Naive thymus-derived CD4-positive, alpha-beta T cell (primary cell): ENCODE measurements at regions of chr9 and their contacts with region 1.

Region 1: GRCh38 chr9:101311758-101312420 is 72.9 kb downstream of the BAAT start:
- DNase-seq: peak in 7 of 9 donors; percentile 17 to 58 (median 54)
- ATAC-seq: peak; percentile 71
- H3K4me3 ChIP-seq: no peak overlapping the region
- H3K4me3 Mint-ChIP-seq: no peak overlapping the region
- H3K27ac ChIP-seq: no peak overlapping the region
- H3K27ac Mint-ChIP-seq: peak overlapping the region in 1 of 9 donors; percentile 39
- H3K4me1 ChIP-seq: no peaks in the 10 kb centered on the region
- H3K4me1 Mint-ChIP-seq: no peaks in the 10 kb centered on the region
- H3K27me3 ChIP-seq: no peaks in the 10 kb centered on the region
- H3K27me3 Mint-ChIP-seq: peaks cover 0 to 22% (median 7%) of the 10 kb centered on the region in 5 donors

Region 2: DNA sequence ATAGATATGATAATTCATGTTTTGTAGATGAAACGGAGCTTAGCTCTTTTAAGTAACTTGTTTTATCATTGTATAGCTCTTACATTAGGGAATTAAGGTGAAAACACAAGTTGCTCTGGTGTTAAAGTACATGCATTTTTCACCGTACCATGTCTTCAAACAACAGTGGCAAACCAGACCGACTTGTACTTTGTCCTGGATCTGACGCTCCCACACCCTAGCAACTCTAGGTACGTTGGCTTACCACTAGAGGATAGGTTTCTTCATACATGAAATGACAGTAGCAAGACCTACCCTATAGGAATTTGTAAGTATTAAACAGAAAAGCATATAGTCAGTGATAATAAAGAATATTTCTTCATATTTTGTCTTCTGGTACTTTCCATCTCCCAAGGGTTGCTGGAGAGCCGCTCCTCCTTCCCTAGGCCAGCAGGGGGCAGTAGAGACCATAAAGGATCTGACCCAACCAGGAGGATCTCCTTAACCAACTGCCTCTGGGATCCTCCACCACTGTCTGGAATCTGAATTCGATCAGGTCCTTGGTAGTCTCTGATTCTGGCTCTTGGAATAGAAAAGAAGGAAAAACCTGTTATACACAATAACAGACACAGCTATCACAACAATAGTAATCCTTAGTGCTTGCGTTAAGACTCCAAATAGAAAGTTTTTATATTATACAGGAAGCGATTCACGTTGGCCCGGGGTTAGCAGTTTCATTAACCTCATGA is 597.4 kb before region 1 on chr9:
- CTCF ChIA-PET with region 1: interaction called, 3 read pairs
- POLR2A ChIA-PET with region 1: no interaction called
- intact Hi-C with region 1: loop called in 1 of 2 experiments (anchors 1 kb)
- DNase-seq: peak in 2 of 9 donors; percentile 2 to 49
- ATAC-seq: no peak
- H3K4me3 ChIP-seq: no peak overlapping the region
- H3K4me3 Mint-ChIP-seq: no peak overlapping the region
- H3K27ac ChIP-seq: no peak overlapping the region
- H3K27ac Mint-ChIP-seq: no peak overlapping the region
- H3K4me1 ChIP-seq: no peaks in the 10 kb centered on the region
- H3K4me1 Mint-ChIP-seq: no peaks in the 10 kb centered on the region
- H3K27me3 ChIP-seq: no peaks in the 10 kb centered on the region
- H3K27me3 Mint-ChIP-seq: peaks cover 0 to 36% (median 26%) of the 10 kb centered on the region in 5 donors

Region 3: GRCh38 chr9:101119206-101119819 is 192.6 kb before region 1 on chr9:
- CTCF ChIA-PET with region 1: no interaction called
- POLR2A ChIA-PET with region 1: no interaction called
- intact Hi-C with region 1: loop called in 1 of 2 experiments (anchors 1 kb)
- DNase-seq: peak in 1 of 9 donors; percentile 21
- ATAC-seq: no peak
- H3K4me3 ChIP-seq: no peak overlapping the region
- H3K4me3 Mint-ChIP-seq: no peak overlapping the region
- H3K27ac ChIP-seq: no peak overlapping the region
- H3K27ac Mint-ChIP-seq: no peak overlapping the region
- H3K4me1 ChIP-seq: no peaks in the 10 kb centered on the region
- H3K4me1 Mint-ChIP-seq: no peaks in the 10 kb centered on the region
- H3K27me3 ChIP-seq: no peaks in the 10 kb centered on the region
- H3K27me3 Mint-ChIP-seq: peaks cover 0 to 10% (median 0%) of the 10 kb centered on the region in 5 donors

Region 4: GRCh38 chr9:101354143-101354764 is 42.4 kb after region 1 on chr9:
- CTCF ChIA-PET with region 1: no interaction called
- POLR2A ChIA-PET with region 1: no interaction called
- intact Hi-C with region 1: no loop called
- DNase-seq: no peak
- ATAC-seq: no peak
- H3K4me3 ChIP-seq: no peak overlapping the region
- H3K4me3 Mint-ChIP-seq: no peak overlapping the region
- H3K27ac ChIP-seq: no peak overlapping the region
- H3K27ac Mint-ChIP-seq: no peak overlapping the region
- H3K4me1 ChIP-seq: no peaks in the 10 kb centered on the region
- H3K4me1 Mint-ChIP-seq: no peaks in the 10 kb centered on the region
- H3K27me3 ChIP-seq: no peaks in the 10 kb centered on the region
- H3K27me3 Mint-ChIP-seq: peaks cover 0 to 10% (median 6%) of the 10 kb centered on the region in 5 donors

Region 5: DNA sequence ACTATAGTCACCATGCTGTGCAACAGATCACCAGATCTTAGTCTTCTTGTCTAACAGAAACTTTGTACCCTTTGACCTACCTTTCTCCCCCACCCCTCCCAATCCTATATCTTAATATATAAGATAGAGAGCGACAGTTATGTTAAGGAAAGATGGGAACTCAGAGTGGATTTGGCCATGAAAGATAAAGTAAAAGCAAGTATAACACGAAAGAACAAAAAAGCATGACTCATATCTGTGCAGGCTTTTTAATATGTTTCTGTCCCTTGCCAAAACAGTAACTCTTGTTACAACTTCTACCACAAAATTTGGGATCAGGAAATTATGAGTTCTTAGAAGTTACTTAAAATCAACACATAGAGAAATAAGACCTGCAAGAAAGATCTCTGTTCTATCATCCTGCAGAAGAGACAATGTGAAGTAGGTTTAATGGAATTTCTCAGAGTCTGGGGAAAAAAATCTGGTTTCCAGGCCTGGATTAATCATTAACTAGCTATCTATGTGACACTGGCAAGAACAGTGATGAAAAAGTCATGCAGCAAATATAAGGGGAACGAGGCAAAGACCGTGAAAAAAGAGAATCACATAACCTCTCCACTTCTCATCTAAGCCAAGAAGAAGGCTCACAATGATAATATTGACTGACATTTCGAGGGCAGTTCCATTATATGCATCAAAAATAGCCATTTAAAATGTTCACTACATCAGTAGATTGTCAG is 54.3 kb after region 1 on chr9:
- CTCF ChIA-PET with region 1: no interaction called
- POLR2A ChIA-PET with region 1: no interaction called
- intact Hi-C with region 1: no loop called
- DNase-seq: no peak
- ATAC-seq: no peak
- H3K4me3 ChIP-seq: no peak overlapping the region
- H3K4me3 Mint-ChIP-seq: no peak overlapping the region
- H3K27ac ChIP-seq: no peak overlapping the region
- H3K27ac Mint-ChIP-seq: no peak overlapping the region
- H3K4me1 ChIP-seq: no peaks in the 10 kb centered on the region
- H3K4me1 Mint-ChIP-seq: no peaks in the 10 kb centered on the region
- H3K27me3 ChIP-seq: no peaks in the 10 kb centered on the region
- H3K27me3 Mint-ChIP-seq: peaks cover 0 to 9% (median 6%) of the 10 kb centered on the region in 5 donors